Mammary epithelial cell (primary cell): ENCODE measurements at regions of chr19 and their contacts with region 1.

Region 1: DNA sequence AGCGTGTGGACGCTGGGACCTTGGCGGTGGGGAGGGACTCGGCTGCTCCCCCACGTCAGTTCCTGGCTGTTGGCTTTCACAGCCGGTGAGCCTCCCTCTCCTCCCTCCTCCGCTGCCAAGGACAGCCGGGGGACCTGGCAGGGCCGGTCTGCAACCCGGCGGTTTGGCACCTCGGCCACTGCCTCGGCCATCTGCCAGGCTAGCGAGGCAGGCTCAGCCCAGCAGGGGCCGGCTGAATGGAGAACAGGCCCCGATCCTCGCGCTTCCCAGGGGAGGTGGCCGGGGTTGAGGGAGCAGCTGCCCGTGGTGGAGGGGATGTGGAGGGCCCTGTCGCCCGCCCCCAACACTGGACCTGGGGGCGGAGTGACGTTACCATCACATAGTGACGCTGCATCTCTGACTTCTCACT is 5.0 kb downstream of the TLE5 start:
- DNase-seq: peak; percentile 62
- H3K4me3 ChIP-seq: no peak overlapping the region
- H3K27ac ChIP-seq: no peak overlapping the region
- H3K4me1 ChIP-seq: peaks cover 51% of the 10 kb centered on the region
- H3K27me3 ChIP-seq: no peaks in the 10 kb centered on the region
- CTCF ChIP-seq: no peak

Region 2: DNA sequence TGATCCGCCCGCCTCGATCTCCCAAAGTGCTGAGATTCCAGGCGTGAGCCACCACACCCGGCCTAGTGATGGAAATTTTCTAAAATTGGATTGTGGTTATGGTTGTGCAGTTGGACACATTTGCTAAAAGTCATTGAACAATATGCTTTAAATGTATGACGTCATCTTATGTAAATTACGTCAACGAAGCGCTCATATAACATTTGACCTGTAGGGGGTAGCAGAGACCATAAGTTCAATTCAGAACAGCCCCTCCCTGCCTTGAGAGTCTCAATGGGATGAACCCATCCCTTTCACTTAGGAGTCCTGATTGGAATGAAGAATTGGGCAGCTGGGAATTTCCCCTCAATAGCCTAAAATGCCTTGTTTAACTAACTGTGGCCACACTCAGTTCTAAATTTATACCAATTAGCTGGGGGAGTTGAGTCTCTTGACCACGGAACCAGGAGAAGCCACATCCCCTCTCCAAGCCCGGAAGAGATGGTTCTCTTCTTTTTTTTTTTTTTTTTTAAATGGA is 95.2 kb before region 1 on chr19:
- CTCF ChIA-PET with region 1: no interaction called
- dilution Hi-C with region 1: no loop called
- in situ Hi-C with region 1: no loop called
- intact Hi-C with region 1: loop called (anchors 2 kb)
- DNase-seq: peak; percentile 38
- H3K4me3 ChIP-seq: no peak overlapping the region
- H3K27ac ChIP-seq: no peak overlapping the region
- H3K4me1 ChIP-seq: no peaks in the 10 kb centered on the region
- H3K27me3 ChIP-seq: no peaks in the 10 kb centered on the region
- CTCF ChIP-seq: peak; percentile 45 to 66

Region 3: GRCh38 chr19:2977001-2977685 is 80.2 kb before region 1 on chr19 and contains the start of gene TLE6:
- CTCF ChIA-PET with region 1: no interaction called
- dilution Hi-C with region 1: no loop called
- in situ Hi-C with region 1: no loop called
- intact Hi-C with region 1: loop called (anchors 5 kb)
- DNase-seq: peak; percentile 94
- H3K4me3 ChIP-seq: peak within 1 kb of the TSS; percentile 61 to 80 (median 62)
- H3K27ac ChIP-seq: no peak within 1 kb of the TSS
- H3K4me1 ChIP-seq: peaks cover 11% of the 10 kb centered on the region
- H3K27me3 ChIP-seq: no peaks in the 10 kb centered on the region
- CTCF ChIP-seq: no peak
- total RNA-seq, gene TLE6: 0.33 to 1.6 TPM

Region 4: GRCh38 chr19:3035542-3036118 is 21.7 kb before region 1 on chr19:
- CTCF ChIA-PET with region 1: no interaction called
- dilution Hi-C with region 1: no loop called
- in situ Hi-C with region 1: no loop called
- intact Hi-C with region 1: loop called (anchors 1 kb)
- DNase-seq: peak; percentile 97
- H3K4me3 ChIP-seq: peak overlapping the region; percentile 51 to 69 (median 57)
- H3K27ac ChIP-seq: peak overlapping the region; percentile 65
- H3K4me1 ChIP-seq: peaks cover 18% of the 10 kb centered on the region
- H3K27me3 ChIP-seq: no peaks in the 10 kb centered on the region
- CTCF ChIP-seq: no peak

Region 5: DNA sequence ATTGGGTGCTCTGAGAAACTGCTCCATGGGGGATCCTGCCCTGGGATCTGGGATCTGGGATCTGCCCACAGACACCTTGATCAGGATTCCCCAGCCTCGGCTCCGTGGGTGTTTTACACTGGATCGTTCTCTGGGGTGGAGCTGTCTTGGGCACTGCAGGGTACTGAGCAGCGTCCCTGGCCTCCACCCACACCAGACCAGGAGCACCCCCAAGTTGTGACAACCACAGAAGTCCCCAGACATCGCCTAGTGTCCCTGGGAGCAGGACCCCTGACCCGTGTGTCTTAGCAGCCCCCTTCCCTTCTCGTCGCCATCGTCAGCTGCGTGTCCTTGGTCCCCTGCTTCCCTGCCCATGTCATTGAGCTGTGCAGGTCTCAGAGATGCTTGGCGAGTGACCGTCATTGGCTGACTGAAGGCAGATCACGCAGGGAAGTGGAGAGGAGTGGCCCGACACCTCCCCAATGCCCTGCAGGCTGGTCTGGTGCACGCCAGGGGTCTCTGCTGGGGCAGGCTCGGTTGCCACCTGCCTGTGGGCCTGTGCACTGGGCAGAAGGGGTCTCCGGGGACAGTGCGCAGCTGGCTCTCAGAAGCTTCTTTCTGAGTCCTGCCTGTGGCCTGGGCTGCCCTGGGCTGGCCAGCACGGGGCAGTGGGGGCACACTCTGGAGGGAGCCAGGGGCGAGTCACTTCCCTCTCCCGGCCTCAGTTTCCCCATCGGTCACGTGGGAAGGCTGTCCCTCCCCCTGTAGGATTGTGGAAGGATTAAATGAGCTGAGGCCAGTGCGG is 43.0 kb after region 1 on chr19:
- CTCF ChIA-PET with region 1: no interaction called
- dilution Hi-C with region 1: loop called (anchors 5 kb)
- in situ Hi-C with region 1: no loop called
- intact Hi-C with region 1: no loop called
- DNase-seq: no peak
- H3K4me3 ChIP-seq: no peak overlapping the region
- H3K27ac ChIP-seq: no peak overlapping the region
- H3K4me1 ChIP-seq: peaks cover 39% of the 10 kb centered on the region
- H3K27me3 ChIP-seq: no peaks in the 10 kb centered on the region
- CTCF ChIP-seq: no peak

Region 6: DNA sequence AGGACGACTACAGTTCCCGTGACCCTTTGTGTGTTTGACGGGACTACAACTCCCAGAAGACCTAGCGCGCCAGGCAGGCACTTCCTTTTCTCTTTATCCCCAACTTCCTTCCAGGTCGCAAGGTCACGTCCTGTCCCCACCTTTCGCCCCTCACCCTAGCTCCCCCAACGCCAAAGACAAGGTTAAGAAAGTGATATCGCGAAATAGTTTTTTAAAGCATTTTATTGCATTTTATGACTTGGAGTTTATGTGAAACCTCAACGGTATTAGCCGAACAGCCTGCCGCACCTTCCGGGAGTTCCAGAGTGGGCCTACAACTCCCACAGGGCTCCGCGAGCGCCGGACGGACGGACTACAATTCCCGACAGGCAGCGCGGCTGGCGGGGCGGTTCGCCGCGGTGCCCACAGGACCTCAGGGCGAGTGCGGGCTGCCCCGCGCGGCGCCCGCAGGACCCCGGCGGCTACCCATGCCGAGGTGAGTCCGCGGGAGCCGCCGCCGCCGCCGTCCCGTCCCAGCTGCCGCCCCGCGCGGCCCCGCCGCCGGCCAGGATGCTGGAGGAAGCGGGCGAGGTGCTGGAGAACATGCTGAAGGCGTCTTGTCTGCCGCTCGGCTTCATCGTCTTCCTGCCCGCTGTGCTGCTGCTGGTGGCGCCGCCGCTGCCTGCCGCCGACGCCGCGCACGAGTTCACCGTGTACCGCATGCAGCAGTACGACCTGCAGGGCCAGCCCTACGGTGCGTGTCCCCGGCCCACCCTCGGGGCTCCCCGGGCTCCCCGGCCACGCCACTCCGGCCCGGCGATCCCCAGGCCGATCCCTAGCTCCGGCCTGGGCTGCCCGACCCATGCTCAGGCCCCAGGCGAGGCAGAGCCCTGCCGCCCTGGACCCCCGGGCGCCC is 128.4 kb after region 1 on chr19 and contains the start of gene NCLN:
- CTCF ChIA-PET with region 1: no interaction called
- dilution Hi-C with region 1: no loop called
- in situ Hi-C with region 1: no loop called
- intact Hi-C with region 1: loop called (anchors 5 kb)
- DNase-seq: peak; percentile 92
- H3K4me3 ChIP-seq: peak within 1 kb of the TSS; percentile 76 to 98 (median 93)
- H3K27ac ChIP-seq: peak within 1 kb of the TSS; percentile 69
- H3K4me1 ChIP-seq: peaks cover 26% of the 10 kb centered on the region
- H3K27me3 ChIP-seq: no peaks in the 10 kb centered on the region
- CTCF ChIP-seq: no peak
- total RNA-seq, gene NCLN: 55.5 to 95.3 TPM

Region 7: DNA sequence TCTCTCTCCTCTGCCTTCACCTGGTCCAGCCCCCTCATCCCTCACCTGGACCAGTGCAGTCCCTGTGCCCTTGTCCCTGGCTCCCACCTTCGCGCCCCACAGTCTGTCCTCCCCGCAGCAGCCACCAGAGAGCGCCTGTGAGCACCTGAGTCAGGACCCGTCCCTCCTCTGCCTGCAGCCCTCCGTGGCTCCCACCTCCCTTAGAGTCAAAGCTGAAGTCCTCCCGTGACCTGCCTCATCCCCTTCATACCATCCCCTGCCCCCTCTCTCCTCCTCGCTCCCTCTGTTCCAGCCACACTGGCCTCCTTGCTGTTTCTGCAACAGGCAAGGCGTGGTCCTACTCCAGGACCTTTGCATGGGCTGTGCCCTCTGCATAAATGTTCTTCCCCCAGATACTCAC is 177.5 kb after region 1 on chr19:
- CTCF ChIA-PET with region 1: no interaction called
- dilution Hi-C with region 1: loop called (anchors 10 kb)
- in situ Hi-C with region 1: no loop called
- intact Hi-C with region 1: no loop called
- DNase-seq: no peak
- H3K4me3 ChIP-seq: no peak overlapping the region
- H3K27ac ChIP-seq: no peak overlapping the region
- H3K4me1 ChIP-seq: no peaks in the 10 kb centered on the region
- H3K27me3 ChIP-seq: no peaks in the 10 kb centered on the region
- CTCF ChIP-seq: peak; percentile 28 to 36